HEK293T (cell line): ENCODE measurements at regions of chr9 and their contacts with region 1.

Region 1: GRCh38 chr9:130866474-130866965 is 30.1 kb downstream of the QRFP start:
- DNase-seq: peak; percentile 81

Region 2: GRCh38 chr9:130768265-130768664 is 98.3 kb before region 1 on chr9:
- CTCF ChIA-PET with region 1: interaction called, 17 read pairs
- POLR2A ChIA-PET with region 1: no interaction called
- DNase-seq: no peak

Region 3: GRCh38 chr9:131046581-131047202 is 180.2 kb after region 1 on chr9:
- CTCF ChIA-PET with region 1: interaction called, 14 read pairs
- POLR2A ChIA-PET with region 1: no interaction called
- DNase-seq: peak; percentile 87